PC-9 (cell line): ENCODE measurements at regions of chr9 and their contacts with region 1.

Region 1: GRCh38 chr9:70924895-70925547 is 196.4 kb downstream of the TRPM3 start:
- DNase-seq: peak in 1 of 2 experiments; percentile 24
- H3K4me3 ChIP-seq: no peak overlapping the region
- H3K27ac ChIP-seq: no peak overlapping the region
- H3K4me1 ChIP-seq: no peaks in the 10 kb centered on the region
- H3K27me3 ChIP-seq: no peaks in the 10 kb centered on the region
- CTCF ChIP-seq: peak; percentile 85

Region 2: DNA sequence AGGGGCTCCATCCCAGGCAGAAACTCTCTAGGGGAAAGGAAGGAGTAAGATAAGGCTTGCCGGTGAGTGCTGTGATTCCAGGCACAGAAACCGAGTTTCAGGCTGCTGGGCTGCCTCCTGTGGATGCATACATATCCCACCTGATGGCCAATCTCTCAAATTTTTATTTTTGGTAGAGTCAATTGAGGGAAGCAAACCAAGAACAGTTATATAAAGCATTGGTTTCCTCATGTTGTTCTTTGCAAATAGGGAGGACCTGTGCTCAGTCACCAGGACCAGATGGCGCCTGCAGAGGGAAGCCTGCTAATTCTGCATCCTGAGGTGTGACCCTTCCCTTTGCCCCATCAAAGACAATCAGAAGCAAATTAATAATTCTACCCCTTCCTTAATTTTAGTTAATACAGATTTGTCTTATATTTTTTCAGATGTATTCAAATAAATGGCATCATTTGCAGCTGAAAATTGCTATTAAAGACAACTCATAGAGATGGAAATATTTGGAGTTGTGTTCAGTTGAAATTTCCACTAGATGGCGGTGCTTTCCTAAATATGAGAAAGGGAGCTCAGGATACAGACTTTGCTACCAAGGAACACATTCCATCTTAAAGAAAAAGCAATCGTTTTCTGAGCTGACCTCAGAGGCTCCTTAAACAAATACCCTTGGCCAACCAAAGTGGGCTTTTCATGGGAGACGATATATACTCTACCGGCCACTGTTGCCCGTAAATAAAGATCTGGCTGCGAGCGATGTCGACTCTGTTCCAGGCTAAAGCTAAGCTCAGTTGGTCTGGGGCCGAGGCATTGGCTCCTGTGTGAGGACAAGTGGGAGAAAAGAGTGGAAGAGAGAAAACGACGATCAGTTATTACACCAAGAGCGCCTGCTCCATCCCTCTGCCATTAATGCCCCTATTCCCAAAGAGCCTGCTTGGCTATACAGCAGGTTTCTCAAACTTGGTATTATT is 284.9 kb before region 1 on chr9:
- CTCF ChIA-PET with region 1: interaction called, 3 read pairs
- POLR2A ChIA-PET with region 1: no interaction called
- intact Hi-C with region 1: loop called (anchors 5 kb)
- DNase-seq: peak in 1 of 2 experiments; percentile 8
- H3K4me3 ChIP-seq: no peak overlapping the region
- H3K27ac ChIP-seq: no peak overlapping the region
- H3K4me1 ChIP-seq: no peaks in the 10 kb centered on the region
- H3K27me3 ChIP-seq: peaks cover 5% of the 10 kb centered on the region; the same call in 1 of the 2 replicates
- CTCF ChIP-seq: peak; percentile 77

Region 3: DNA sequence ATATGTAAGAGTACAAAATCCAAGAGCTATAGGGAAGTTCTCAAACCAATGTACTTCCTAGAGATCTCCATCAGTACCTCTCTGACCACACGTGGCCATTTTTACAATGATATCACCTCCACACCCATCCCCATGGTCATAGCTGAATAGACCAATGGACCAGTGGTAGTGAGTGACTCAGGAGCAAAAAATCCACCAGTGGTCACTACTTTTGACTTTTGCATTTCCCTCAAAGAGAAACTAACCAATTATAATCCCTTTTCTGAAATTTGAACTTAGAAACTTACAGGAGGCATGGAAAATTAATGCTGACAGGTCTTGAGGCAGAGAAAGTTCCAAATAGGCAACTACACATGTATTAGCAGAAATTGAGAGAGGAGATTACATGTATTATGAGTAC is 42.0 kb before region 1 on chr9:
- CTCF ChIA-PET with region 1: no interaction called
- POLR2A ChIA-PET with region 1: no interaction called
- intact Hi-C with region 1: no loop called
- DNase-seq: no peak
- H3K4me3 ChIP-seq: no peak overlapping the region
- H3K27ac ChIP-seq: no peak overlapping the region
- H3K4me1 ChIP-seq: no peaks in the 10 kb centered on the region
- H3K27me3 ChIP-seq: no peaks in the 10 kb centered on the region
- CTCF ChIP-seq: no peak

Region 4: DNA sequence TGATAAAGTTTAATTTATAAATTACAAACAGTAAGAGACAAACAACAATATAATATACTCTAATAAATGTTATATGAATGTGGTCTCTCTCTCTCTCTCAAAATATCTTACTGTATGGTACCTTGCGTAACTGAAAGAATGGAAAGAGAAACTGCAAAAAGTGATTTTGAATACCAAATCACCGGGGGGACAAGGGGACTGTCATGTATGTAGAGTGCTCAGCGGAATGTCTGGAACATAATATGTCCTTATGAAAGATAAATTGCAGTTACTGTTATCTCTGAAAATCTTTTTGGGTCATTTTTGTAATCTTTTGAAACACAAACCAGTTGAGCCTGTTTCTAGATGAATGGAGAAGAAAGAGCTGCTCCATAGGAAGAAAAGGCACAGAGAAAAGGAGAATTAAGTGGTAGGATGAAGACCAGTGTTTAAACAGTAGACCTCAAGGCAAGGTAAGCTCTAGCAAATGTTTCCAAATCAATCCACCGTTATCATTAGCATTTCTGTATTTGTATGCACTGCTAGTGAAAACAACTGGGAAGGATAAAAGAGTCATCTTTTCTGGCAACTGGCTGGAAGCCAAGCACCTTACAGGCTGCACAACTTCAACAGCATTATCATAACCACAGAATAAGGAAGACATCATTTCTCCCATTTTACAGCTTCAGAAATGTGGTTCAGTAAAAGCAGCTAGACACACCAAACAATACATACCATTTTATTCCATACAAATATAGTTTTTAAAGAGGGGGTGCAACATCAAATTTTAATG is 37.8 kb after region 1 on chr9:
- CTCF ChIA-PET with region 1: interaction called, 3 read pairs
- POLR2A ChIA-PET with region 1: no interaction called
- intact Hi-C with region 1: loop called (anchors 5 kb)
- DNase-seq: peak in 1 of 2 experiments; percentile 38
- H3K4me3 ChIP-seq: no peak overlapping the region
- H3K27ac ChIP-seq: no peak overlapping the region
- H3K4me1 ChIP-seq: 0 out of 2 replicates have a peak, but pooled peaks cover 9% of the 10 kb centered on the region
- H3K27me3 ChIP-seq: no peaks in the 10 kb centered on the region
- CTCF ChIP-seq: no peak

Region 5: GRCh38 chr9:71001780-71002386 is 76.9 kb after region 1 on chr9:
- CTCF ChIA-PET with region 1: interaction called, 4 read pairs
- POLR2A ChIA-PET with region 1: no interaction called
- intact Hi-C with region 1: loop called (anchors 1 kb)
- DNase-seq: peak in 1 of 2 experiments; percentile 44
- H3K4me3 ChIP-seq: no peak overlapping the region
- H3K27ac ChIP-seq: no peak overlapping the region
- H3K4me1 ChIP-seq: no peaks in the 10 kb centered on the region
- H3K27me3 ChIP-seq: no peaks in the 10 kb centered on the region
- CTCF ChIP-seq: peak; percentile 77

Region 6: DNA sequence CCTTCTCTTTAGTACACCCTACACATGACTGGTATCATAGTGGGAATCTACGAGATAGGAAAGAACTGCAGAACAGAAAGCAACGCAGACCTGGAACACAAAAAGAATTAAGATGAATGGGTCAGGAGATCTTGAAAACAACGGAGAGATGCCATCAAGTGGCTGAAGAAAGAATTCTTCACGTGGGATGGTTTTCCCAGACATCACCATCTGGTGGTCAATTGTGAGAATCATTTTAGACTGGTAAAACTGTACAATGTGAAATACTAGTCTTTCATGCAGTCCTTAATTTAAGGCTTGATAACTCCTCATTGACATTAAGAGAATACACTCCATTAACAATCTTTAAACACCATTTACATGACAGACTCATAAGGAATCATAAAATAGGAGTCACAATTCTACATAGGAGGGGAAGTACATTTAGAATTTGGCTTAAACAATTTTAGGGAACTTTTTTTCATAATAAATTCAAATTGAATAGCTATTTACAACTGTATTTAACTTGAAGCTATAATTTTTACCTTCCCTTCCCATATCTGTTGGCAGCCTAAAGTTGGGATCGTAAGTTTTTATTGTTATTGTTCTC is 324.8 kb after region 1 on chr9:
- CTCF ChIA-PET with region 1: interaction called, 3 read pairs
- POLR2A ChIA-PET with region 1: no interaction called
- intact Hi-C with region 1: loop called (anchors 1 kb)
- DNase-seq: peak; percentile 17 to 42
- H3K4me3 ChIP-seq: no peak overlapping the region
- H3K27ac ChIP-seq: no peak overlapping the region
- H3K4me1 ChIP-seq: no peaks in the 10 kb centered on the region
- H3K27me3 ChIP-seq: no peaks in the 10 kb centered on the region
- CTCF ChIP-seq: peak; percentile 72